ENCODE measurements at regions of chr4 and their contacts with region 1.

Region 1: GRCh38 chr4:101347557-101348366 is 436 bp upstream of the PPP3CA start:
- DNase-seq: peak; percentile 99
- H3K4me3 Mint-ChIP-seq: peak overlapping the region; percentile 98
- H3K27ac Mint-ChIP-seq: peak overlapping the region; percentile 94
- H3K4me1 Mint-ChIP-seq: peaks cover 42% of the 10 kb centered on the region
- H3K27me3 Mint-ChIP-seq: peaks cover 8% of the 10 kb centered on the region

Region 2: GRCh38 chr4:101020956-101021355 is 326.8 kb before region 1 on chr4:
- CTCF ChIA-PET with region 1: interaction called, 6 read pairs
- POLR2A ChIA-PET with region 1: interaction called, 26 read pairs
- DNase-seq: peak; percentile 31
- H3K4me3 Mint-ChIP-seq: peak overlapping the region; percentile 59
- H3K27ac Mint-ChIP-seq: peak overlapping the region; percentile 92
- H3K4me1 Mint-ChIP-seq: peaks cover 71% of the 10 kb centered on the region
- H3K27me3 Mint-ChIP-seq: no peaks in the 10 kb centered on the region

Region 3: DNA sequence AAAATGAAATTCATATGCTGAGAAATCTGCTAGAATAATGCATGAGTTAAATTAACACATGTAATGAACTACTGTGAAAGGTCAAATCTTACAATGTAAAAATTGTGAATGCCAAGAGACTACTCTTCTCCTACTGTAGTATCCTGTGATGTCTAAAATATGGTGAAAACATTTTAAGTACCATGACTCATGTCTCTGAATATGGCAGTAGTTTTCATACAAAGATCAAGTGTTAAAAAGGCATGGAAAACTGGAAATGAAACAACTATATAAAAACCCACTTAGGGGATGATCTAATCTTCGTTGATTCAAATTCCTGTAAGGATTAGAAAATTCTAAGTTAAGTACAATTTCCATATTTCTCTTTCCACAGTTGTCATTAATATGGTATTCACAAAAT is 221.7 kb before region 1 on chr4:
- CTCF ChIA-PET with region 1: no interaction called
- POLR2A ChIA-PET with region 1: no interaction called
- DNase-seq: no peak
- H3K4me3 Mint-ChIP-seq: no peak overlapping the region
- H3K27ac Mint-ChIP-seq: no peak overlapping the region
- H3K4me1 Mint-ChIP-seq: peaks cover 6% of the 10 kb centered on the region
- H3K27me3 Mint-ChIP-seq: no peaks in the 10 kb centered on the region

Region 4: DNA sequence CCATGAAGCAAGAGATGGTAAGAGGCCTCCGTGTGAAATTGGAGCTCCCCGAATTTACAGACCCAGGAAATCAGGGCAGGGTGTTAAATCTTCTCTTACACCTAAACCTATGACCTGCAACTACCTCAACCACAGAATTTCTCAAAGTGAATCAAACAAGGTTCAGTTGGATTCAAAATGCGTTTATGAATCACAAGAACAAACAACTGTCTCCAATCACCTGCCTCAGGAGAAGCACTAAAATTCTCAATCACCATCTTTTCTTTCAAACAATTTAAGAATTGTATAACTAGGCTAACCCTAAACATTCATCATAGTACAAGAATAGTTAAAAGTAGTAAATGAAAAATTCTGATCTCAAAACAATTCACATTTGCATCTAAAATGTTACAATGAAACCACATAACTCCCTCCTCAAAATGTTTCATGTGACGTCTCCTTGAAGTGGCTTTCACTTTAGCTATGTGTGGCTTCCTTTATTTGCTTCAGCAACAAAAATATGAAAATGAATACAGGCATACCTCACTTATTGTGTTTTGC is 19.6 kb before region 1 on chr4:
- CTCF ChIA-PET with region 1: interaction called, 4 read pairs
- POLR2A ChIA-PET with region 1: interaction called, 46 read pairs
- DNase-seq: no peak
- H3K4me3 Mint-ChIP-seq: peak overlapping the region; percentile 57
- H3K27ac Mint-ChIP-seq: peak overlapping the region; percentile 89
- H3K4me1 Mint-ChIP-seq: peaks cover 38% of the 10 kb centered on the region
- H3K27me3 Mint-ChIP-seq: no peaks in the 10 kb centered on the region

Region 5: DNA sequence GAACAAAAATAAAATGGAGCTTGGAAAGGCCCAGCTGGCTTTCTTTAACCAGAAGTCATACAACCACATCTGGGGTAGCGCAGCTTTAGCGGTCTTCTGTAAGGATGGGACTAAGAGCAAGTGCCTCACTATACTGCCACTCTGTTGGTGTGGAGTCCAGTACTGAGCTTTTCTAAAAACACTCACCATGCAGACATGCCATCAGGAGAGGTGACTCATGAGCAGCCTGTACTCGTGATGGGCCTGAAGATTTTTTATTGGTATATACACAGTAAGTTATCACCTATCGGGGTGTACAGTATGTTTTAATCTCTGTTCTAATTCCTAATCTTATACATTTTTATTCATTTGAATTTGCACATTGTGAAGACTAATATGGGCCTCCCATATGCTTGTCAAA is 10.1 kb before region 1 on chr4:
- CTCF ChIA-PET with region 1: interaction called, 6 read pairs
- POLR2A ChIA-PET with region 1: interaction called, 10 read pairs
- DNase-seq: no peak
- H3K4me3 Mint-ChIP-seq: no peak overlapping the region
- H3K27ac Mint-ChIP-seq: no peak overlapping the region
- H3K4me1 Mint-ChIP-seq: peaks cover 42% of the 10 kb centered on the region
- H3K27me3 Mint-ChIP-seq: no peaks in the 10 kb centered on the region

Region 6: GRCh38 chr4:101419324-101420135 is 71.8 kb after region 1 on chr4:
- CTCF ChIA-PET with region 1: interaction called, 4 read pairs
- POLR2A ChIA-PET with region 1: interaction called, 38 read pairs
- DNase-seq: no peak
- H3K4me3 Mint-ChIP-seq: no peak overlapping the region
- H3K27ac Mint-ChIP-seq: peak overlapping the region; percentile 93
- H3K4me1 Mint-ChIP-seq: peaks cover 55% of the 10 kb centered on the region
- H3K27me3 Mint-ChIP-seq: peaks cover 14% of the 10 kb centered on the region

Region 7: DNA sequence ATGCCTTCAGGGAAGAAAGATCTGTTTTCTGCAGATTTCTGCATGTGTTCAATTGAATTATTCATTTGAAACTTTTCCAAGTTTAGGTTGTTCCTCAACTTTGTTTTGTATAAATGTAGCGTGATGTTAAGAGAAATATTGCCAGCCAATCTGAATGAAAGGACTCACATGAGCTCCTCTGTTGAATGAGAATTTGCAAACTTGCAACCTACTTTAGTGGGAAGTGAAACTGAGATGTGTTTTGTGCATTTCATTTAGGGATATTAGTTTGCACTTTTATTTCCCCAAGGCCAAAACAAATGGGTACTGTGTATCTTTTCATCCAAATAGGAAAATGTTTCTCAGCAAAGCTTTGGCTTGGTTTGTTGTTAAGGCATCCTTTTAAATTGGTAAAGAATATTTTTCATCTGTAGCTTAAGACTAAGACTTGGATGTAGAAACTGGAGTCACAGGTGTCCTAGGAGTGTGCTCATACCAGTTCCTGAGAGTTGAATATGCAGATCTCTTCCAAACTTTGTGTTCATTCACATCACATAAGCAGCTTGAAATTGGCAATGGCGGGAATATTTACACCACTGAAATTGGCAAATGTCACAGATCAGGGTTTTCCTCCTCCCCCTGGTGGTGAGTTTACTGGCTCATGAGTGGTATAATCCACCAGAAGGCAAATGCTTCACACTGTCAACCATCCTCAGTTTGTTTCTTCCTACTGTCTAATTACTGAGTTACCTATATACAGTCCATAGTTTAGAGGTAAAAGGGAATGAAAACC is 249.2 kb after region 1 on chr4:
- CTCF ChIA-PET with region 1: interaction called, 17 read pairs
- POLR2A ChIA-PET with region 1: no interaction called
- DNase-seq: peak; percentile 36
- H3K4me3 Mint-ChIP-seq: no peak overlapping the region
- H3K27ac Mint-ChIP-seq: no peak overlapping the region
- H3K4me1 Mint-ChIP-seq: peaks cover 2% of the 10 kb centered on the region
- H3K27me3 Mint-ChIP-seq: no peaks in the 10 kb centered on the region